IMR-90 (cell line): ENCODE measurements at regions of chr19 and their contacts with region 1.

Region 1: GRCh38 chr19:14890643-14891379 is 4.9 kb upstream of the OR7A17 start:
- DNase-seq: no peak
- ATAC-seq: no peak
- H3K4me3 ChIP-seq: no peak overlapping the region
- H3K27ac ChIP-seq: no peak overlapping the region
- H3K4me1 ChIP-seq: no peaks in the 10 kb centered on the region
- H3K27me3 ChIP-seq: no peaks in the 10 kb centered on the region
- CTCF ChIP-seq: no peak
- POLR2A ChIP-seq: no peak
- RAD21 ChIP-seq: no peak

Region 2: DNA sequence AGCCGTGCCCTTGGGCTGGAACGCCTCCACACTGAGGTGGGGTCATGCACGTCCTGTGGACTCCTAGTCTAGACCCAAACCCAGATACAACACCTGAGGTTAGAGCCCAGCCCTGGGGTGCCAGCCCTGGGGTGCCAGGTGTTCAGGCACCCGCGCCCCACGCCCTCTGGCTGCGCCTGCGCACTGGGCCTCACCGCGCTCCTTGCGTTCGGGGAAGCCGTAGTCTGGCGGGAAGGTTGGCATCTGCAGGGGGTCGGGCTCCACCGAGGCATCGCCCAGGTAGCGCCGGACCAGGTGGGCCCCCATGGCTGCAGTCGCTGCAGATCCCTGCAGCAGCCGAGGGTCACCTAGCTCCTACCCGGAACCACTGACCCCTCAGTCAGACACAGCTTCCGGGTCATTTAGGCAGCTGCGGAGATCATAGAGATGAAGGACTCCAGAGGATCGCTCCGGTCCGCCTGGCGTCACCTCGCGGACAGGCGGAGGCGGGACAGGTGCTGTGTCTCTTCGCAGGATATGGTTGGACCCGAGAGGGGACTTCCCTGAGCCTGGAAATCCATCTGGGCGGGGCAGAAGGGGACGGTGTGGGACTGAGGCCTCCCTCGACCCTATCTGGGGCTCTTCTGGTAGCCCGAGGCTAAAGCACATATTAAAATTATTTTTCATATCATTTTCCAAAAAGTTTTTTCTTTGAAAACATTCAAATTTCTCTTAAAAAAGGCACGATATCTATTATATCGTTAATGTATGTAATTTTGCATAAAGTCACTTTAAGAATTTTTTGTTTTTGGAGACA is 318.9 kb before region 1 on chr19 and contains the start of gene NDUFB7:
- CTCF ChIA-PET with region 1: no interaction called
- POLR2A ChIA-PET with region 1: no interaction called
- dilution Hi-C with region 1: no loop called
- in situ Hi-C with region 1: loop called (anchors 25 kb)
- intact Hi-C with region 1: loop called (anchors 1 kb)
- DNase-seq: peak; percentile 95
- ATAC-seq: peak; percentile 94
- H3K4me3 ChIP-seq: peak within 1 kb of the TSS; percentile 79
- H3K27ac ChIP-seq: peak within 1 kb of the TSS; percentile 87
- H3K4me1 ChIP-seq: peaks cover 3% of the 10 kb centered on the region; the same call in 1 of the 2 replicates
- H3K27me3 ChIP-seq: no peaks in the 10 kb centered on the region
- CTCF ChIP-seq: peak; percentile 85
- POLR2A ChIP-seq: 0 out of 2 replicates have a peak, but pooled peaks have one; percentile 31
- RAD21 ChIP-seq: peak; percentile 22; the same call in 1 of the 2 replicates
- total RNA-seq, gene NDUFB7: 337 and 436 TPM in 2 replicates

Region 3: DNA sequence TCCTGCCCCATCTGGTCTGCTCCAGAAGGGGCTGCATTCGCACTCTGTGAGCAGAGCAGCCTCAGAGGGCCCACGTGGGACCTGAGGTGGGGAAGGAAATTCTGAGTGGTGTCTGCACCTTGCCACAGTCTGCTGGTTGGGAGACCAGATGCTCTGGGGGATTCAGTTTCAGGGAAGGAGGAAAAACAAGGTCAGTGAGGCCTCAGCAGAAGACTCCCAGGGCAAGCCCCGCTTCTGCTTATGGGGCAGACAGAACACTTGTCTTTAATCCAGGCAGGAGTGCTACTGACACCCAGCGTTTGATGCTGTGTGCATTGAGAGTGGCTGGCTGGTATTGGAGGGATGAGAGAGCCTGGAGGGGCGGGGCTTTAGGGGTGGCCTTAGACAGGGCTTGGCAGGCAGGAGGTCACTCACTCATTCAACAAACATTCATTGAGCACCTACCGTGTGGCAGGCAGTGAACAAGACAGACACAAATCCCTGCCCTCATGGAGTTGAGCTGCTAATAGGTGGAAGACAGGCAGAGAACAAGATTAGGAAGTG is 312.9 kb before region 1 on chr19:
- CTCF ChIA-PET with region 1: no interaction called
- POLR2A ChIA-PET with region 1: no interaction called
- dilution Hi-C with region 1: no loop called
- in situ Hi-C with region 1: loop called (anchors 25 kb)
- intact Hi-C with region 1: loop called (anchors 1 kb)
- DNase-seq: no peak
- ATAC-seq: no peak
- H3K4me3 ChIP-seq: no peak overlapping the region
- H3K27ac ChIP-seq: no peak overlapping the region
- H3K4me1 ChIP-seq: no peaks in the 10 kb centered on the region
- H3K27me3 ChIP-seq: no peaks in the 10 kb centered on the region
- CTCF ChIP-seq: no peak
- POLR2A ChIP-seq: no peak
- RAD21 ChIP-seq: no peak

Region 4: DNA sequence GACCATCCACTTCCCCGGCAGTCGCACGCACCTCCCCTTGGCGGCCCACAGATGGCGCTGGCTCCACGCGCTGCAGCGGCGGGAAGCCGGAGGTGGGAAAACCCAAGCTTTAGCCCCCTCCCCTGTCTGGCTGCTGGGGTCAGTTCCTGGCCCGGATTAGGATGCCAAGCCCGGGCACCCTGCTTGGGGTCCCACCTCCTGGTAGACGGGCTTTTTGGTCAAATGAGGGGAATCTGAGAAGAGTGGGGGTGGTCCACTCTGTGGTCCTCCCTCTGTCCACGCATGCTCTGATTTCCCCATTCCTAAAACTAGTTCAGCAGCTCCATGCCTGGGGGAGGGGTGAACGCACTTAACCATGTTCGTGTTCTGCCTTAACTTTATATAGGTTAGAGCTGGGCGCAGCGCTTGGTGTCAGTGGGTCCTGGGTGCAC is 104.4 kb before region 1 on chr19:
- CTCF ChIA-PET with region 1: no interaction called
- POLR2A ChIA-PET with region 1: no interaction called
- dilution Hi-C with region 1: no loop called
- in situ Hi-C with region 1: no loop called
- intact Hi-C with region 1: loop called (anchors 1 kb)
- DNase-seq: no peak
- ATAC-seq: no peak; the same call in 1 of the 2 replicates
- H3K4me3 ChIP-seq: no peak overlapping the region
- H3K27ac ChIP-seq: no peak overlapping the region
- H3K4me1 ChIP-seq: no peaks in the 10 kb centered on the region
- H3K27me3 ChIP-seq: no peaks in the 10 kb centered on the region
- CTCF ChIP-seq: peak; percentile 27
- POLR2A ChIP-seq: no peak
- RAD21 ChIP-seq: no peak